ENCODE measurements at regions of chr16 and their contacts with region 1.

Region 1: GRCh38 chr16:68093816-68094613 is 8.8 kb downstream of the NFATC3 start:
- DNase-seq: peak; percentile 44 to 63 (median 56)
- H3K4me3 ChIP-seq: no peak overlapping the region
- H3K27ac ChIP-seq: no peak overlapping the region
- H3K4me1 ChIP-seq: peaks cover 33 to 54% (median 45%) of the 10 kb centered on the region in 4 experiments
- H3K27me3 ChIP-seq: no peaks in the 10 kb centered on the region

Region 2: GRCh38 chr16:67968400-67969253 is 125.4 kb before region 1 on chr16 and contains the start of gene SLC12A4:
- CTCF ChIA-PET with region 1: no interaction called
- POLR2A ChIA-PET with region 1: no interaction called
- DNase-seq: peak; percentile 68 to 90 (median 89)
- H3K4me3 ChIP-seq: peak within 1 kb of the TSS; percentile 60 to 89 (median 82)
- H3K27ac ChIP-seq: peak within 1 kb of the TSS in 1 of 2 experiments; percentile 68
- H3K4me1 ChIP-seq: peaks cover 0 to 30% (median 20%) of the 10 kb centered on the region in 4 experiments
- H3K27me3 ChIP-seq: no peaks in the 10 kb centered on the region

Region 3: DNA sequence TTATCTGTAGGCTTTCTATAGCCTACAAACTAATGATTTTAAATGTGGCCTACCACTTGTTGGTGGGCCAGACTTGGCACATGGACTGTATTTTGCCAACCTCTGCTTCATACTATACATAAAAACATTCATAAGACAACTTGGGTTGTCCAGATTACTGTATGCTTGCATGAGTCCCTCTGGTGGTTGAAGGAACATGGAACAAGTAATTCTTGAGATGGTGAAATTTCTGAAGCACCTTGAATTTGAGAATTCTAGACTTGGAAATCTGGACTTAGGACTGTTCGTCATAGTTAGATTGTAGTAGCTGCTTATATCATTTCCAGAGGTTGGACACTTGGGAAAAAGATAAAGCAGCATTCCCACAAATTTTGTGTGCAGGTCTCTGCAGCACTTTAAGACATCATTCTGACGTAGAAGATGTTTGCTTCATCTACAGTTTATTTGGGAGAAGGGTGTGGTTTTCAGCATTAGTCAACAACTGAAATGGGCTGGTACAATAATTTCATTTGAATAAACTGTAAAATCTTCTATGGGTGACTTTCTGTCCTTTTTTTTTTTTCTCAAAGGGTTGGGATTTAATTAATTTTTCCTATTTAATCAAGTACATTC is 22.3 kb after region 1 on chr16:
- CTCF ChIA-PET with region 1: interaction called, 54 read pairs
- POLR2A ChIA-PET with region 1: interaction called, 3 read pairs
- DNase-seq: peak; percentile 57 to 70 (median 68)
- H3K4me3 ChIP-seq: no peak overlapping the region
- H3K27ac ChIP-seq: no peak overlapping the region
- H3K4me1 ChIP-seq: peaks cover 0 to 8% (median 1%) of the 10 kb centered on the region in 4 experiments
- H3K27me3 ChIP-seq: no peaks in the 10 kb centered on the region

Region 4: DNA sequence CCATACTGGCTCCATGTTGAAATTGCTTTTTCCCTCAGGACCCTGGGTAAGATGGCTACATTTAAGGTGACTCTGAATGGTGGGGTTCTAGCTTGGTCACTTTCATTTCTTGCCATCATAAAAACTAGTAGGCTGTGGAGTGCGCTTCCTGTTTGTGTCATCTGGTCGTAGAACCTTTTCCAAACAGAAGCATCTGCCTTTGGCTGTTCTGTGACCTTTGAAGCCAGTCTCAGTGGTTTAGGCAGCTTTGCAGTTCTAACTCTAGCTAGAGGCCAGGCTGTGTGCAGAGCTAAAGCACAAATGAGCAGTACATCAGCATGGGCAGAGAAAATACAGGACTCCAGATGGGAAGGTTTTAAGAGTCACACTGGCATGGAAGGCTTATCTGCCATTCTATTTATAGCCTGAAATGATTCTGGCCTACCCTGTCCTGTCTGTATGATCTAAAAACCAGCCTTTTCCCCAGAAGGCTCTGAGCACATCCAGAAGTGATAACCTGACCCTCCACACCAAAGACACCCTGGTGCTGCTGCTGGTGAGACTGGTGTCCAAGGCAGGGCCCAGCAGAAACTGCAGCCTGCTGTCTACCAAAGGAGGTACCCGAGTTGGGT is 133.3 kb after region 1 on chr16:
- CTCF ChIA-PET with region 1: interaction called, 13 read pairs
- POLR2A ChIA-PET with region 1: no interaction called
- DNase-seq: no peak
- H3K4me3 ChIP-seq: peak overlapping the region in 1 of 7 experiments; percentile 9
- H3K27ac ChIP-seq: peak overlapping the region in 1 of 2 experiments; percentile 67
- H3K4me1 ChIP-seq: peaks cover 0 to 27% (median 22%) of the 10 kb centered on the region in 4 experiments
- H3K27me3 ChIP-seq: no peaks in the 10 kb centered on the region